ENCODE measurements at regions of chr9 and their contacts with region 1.

Region 1: DNA sequence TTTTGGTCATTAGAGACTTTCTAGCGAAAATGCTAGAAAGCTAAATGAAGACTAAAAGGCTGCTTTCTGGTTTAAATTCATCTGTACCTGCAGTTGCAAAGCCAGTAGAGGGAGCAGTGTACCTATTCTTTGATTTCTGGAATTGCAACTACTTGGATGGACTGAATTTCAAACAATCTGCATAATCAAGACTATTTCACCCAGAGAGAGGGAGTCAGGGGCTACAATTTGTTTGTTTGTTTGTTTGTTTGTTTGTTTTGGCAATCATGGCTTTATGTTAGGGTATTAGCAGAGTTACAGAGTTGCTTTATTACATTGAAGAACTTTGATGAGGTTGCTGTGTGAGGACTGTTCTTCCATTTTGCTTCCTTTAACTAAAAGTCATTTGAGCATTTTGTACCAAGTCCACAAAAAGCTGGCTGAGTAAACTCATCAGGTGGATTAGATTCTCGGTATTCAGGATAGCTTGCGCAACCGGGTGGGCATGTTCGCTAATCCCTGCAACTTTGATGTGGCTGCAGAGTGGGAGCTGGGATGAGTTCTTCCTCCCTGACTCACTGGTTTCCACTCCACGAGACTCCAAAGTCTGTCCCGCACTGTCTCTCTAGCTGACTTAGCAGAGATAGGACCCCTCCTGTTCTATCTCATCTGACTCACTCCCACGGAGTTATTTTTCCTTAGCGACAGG is 80.0 kb upstream of the TUT7 start:
- DNase-seq: peak; percentile 34
- ATAC-seq: peak; percentile 76
- H3K4me3 ChIP-seq: no peak overlapping the region
- H3K27ac ChIP-seq: no peak overlapping the region
- H3K4me1 ChIP-seq: peaks cover 0 to 6% of the 10 kb centered on the region in 2 experiments; a peak in 3 of 4 replicates
- H3K27me3 ChIP-seq: no peaks in the 10 kb centered on the region
- CTCF ChIP-seq: peak; percentile 58 to 88 (median 80); a peak in 5 of 6 replicates
- POLR2A ChIP-seq: no peak
- RAD21 ChIP-seq: peak; percentile 76

Region 2: GRCh38 chr9:86413966-86414880 is 20.0 kb before region 1 on chr9:
- CTCF ChIA-PET with region 1: interaction called, 16 read pairs
- POLR2A ChIA-PET with region 1: no interaction called
- RAD21 ChIA-PET with region 1: no interaction called
- intact Hi-C with region 1: no loop called
- DNase-seq: no peak
- ATAC-seq: peak; percentile 69
- H3K4me3 ChIP-seq: no peak overlapping the region
- H3K27ac ChIP-seq: no peak overlapping the region
- H3K4me1 ChIP-seq: no peaks in the 10 kb centered on the region
- H3K27me3 ChIP-seq: peaks cover 8% of the 10 kb centered on the region; the same call in 1 of the 2 replicates
- CTCF ChIP-seq: peak; percentile 51 to 82 (median 56); a peak in 5 of 6 replicates
- POLR2A ChIP-seq: no peak
- RAD21 ChIP-seq: peak; percentile 74

Region 3: GRCh38 chr9:86460216-86461004 is 26.2 kb after region 1 on chr9:
- CTCF ChIA-PET with region 1: no interaction called
- POLR2A ChIA-PET with region 1: no interaction called
- RAD21 ChIA-PET with region 1: no interaction called
- intact Hi-C with region 1: no loop called
- DNase-seq: no peak
- ATAC-seq: no peak
- H3K4me3 ChIP-seq: no peak overlapping the region
- H3K27ac ChIP-seq: no peak overlapping the region
- H3K4me1 ChIP-seq: no peaks in the 10 kb centered on the region
- H3K27me3 ChIP-seq: peaks cover 8% of the 10 kb centered on the region; the same call in 1 of the 2 replicates
- CTCF ChIP-seq: no peak
- POLR2A ChIP-seq: no peak
- RAD21 ChIP-seq: no peak

Region 4: DNA sequence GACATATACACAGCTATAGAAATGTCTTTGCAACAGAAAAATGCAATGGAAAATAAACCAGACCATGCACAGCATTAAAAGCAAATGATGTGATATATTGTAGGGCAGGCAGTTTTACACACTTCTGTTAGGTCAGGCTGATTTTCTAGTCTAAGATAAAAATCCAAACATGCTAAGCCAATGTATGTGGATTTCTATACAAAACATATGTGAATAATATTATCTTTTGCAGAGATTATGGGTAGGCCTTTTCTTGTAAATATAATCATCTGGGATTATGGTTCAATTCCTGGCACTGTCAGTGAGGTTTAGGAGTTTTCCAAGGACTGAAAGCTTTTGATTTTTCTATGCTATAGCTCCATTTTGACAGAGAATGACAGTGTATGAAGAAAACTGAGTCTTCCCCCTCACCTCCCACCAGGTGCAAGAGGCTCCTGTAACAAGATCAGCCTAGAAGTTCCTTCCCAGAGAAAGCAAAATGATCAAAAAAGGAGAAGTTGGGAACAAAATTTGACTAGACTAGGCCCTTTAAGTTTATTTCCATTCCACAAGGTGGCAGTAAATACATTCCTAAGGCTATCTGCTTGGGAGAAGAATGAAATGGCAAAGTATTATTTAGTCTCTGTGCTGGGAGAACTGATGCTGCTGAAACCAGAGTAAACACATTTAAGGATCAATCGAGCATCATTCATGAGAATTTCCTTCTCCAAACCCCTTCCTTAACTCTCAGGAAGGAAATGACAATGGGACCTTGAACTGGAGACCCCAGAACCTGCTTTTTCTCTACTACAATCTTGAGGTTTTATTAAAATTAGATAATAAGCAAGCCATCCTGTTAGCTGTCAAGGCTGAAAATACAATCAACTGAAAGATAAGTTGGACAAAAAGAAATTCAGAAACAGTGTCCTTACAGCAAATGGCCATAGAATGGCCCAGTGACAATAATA is 53.0 kb after region 1 on chr9:
- CTCF ChIA-PET with region 1: interaction called, 15 read pairs
- POLR2A ChIA-PET with region 1: no interaction called
- RAD21 ChIA-PET with region 1: no interaction called
- intact Hi-C with region 1: no loop called
- DNase-seq: peak; percentile 31
- ATAC-seq: peak; percentile 68; the same call in 1 of the 2 replicates
- H3K4me3 ChIP-seq: no peak overlapping the region
- H3K27ac ChIP-seq: no peak overlapping the region
- H3K4me1 ChIP-seq: no peaks in the 10 kb centered on the region
- H3K27me3 ChIP-seq: peaks cover 23% of the 10 kb centered on the region
- CTCF ChIP-seq: peak; percentile 40 to 62 (median 46); a peak in 4 of 6 replicates
- POLR2A ChIP-seq: no peak
- RAD21 ChIP-seq: peak; percentile 73

Region 5: DNA sequence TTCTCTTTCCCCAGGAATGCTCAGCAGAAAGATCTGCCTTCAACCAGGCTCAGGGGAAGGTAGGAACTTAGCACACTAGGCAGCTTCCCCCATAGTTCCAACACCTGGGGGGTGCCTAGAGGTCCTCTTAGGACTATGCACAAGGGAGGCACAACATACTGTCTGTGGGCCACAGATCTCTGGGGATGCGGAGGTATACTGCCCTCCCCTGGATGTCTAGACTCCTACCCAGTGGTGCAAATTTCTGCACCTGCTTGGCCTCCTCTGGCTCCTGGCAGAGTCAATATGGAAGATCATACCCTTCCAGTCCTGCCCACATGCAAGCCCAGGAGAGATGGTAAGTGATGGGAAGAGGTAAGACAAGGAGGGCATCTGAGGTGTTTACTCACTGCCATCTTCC is 816.0 kb after region 1 on chr9:
- CTCF ChIA-PET with region 1: no interaction called
- POLR2A ChIA-PET with region 1: no interaction called
- RAD21 ChIA-PET with region 1: no interaction called
- intact Hi-C with region 1: loop called (anchors 5 kb)
- DNase-seq: no peak
- ATAC-seq: peak; percentile 44; the same call in 1 of the 2 replicates
- H3K4me3 ChIP-seq: no peak overlapping the region
- H3K27ac ChIP-seq: no peak overlapping the region
- H3K4me1 ChIP-seq: no peaks in the 10 kb centered on the region
- H3K27me3 ChIP-seq: peaks cover 21% of the 10 kb centered on the region
- CTCF ChIP-seq: 0 out of 6 replicates have a peak, but pooled peaks of 2 of the 3 experiments have one; percentile 8 to 14
- POLR2A ChIP-seq: no peak
- RAD21 ChIP-seq: peak; percentile 14; the same call in 1 of the 2 replicates

Region 6: DNA sequence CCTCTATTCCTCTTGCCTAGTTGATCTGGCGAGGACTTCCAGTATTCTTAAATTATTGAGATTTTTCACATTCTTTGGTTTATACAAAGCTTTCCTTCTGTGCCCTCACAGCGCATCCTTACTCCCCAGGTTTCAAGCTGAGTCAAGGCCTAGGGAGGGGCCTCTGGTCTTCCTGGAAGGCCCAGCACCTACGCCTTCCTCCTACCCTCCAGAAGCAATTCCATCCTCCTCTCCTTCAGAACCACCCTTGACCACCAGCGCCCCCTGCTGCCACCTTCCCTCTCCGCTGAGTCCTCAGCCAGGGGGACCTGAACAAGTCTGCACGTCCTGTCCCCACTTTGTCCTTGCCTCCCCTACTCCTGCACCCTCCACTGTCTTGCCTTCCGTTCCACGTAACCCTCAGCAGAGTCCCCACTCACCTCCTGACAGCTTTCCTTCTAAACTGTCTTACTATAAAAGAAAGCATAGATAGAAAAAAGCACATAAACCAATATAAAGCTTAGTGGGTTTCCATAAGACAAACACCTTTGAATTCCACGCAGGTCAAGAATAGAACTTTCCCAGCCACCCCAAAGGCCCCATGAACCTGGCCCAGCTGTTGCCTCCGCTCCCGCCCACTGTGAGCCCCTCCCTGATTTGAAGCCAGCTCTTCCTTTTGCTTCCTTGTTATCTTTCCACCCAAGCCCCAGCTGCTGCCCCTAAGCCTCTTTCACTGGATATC is 1228.8 kb after region 1 on chr9:
- CTCF ChIA-PET with region 1: interaction called, 5 read pairs
- POLR2A ChIA-PET with region 1: no interaction called
- RAD21 ChIA-PET with region 1: no interaction called
- intact Hi-C with region 1: loop called (anchors 5 kb)
- DNase-seq: peak; percentile 51
- ATAC-seq: peak; percentile 98
- H3K4me3 ChIP-seq: no peak overlapping the region
- H3K27ac ChIP-seq: no peak overlapping the region
- H3K4me1 ChIP-seq: no peaks in the 10 kb centered on the region
- H3K27me3 ChIP-seq: no peaks in the 10 kb centered on the region
- CTCF ChIP-seq: peak; percentile 84 to 90 (median 85)
- POLR2A ChIP-seq: no peak
- RAD21 ChIP-seq: peak; percentile 92

Region 7: DNA sequence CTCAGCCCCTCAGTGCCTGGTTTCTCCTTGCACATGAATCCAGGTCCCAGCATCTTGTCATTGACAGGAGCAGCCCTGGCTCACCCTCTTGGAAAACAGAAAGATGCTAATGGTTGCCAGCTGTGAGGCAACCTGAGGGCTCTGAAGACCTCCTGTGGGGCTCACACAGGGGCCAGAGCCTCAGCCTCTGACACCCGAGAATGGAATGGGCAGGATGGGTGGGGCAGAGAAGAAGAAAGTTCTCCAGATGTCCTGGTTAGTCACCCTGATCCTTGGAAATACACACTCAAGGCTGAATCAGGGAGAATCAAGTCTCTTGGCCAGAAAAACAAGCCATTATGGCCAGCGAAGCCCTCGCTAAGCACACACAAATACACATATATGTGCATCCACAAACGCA is 1416.2 kb after region 1 on chr9:
- CTCF ChIA-PET with region 1: no interaction called
- POLR2A ChIA-PET with region 1: no interaction called
- RAD21 ChIA-PET with region 1: no interaction called
- intact Hi-C with region 1: no loop called
- DNase-seq: no peak
- ATAC-seq: 0 out of 2 replicates have a peak, but pooled peaks have one; percentile 42
- H3K4me3 ChIP-seq: no peak overlapping the region
- H3K27ac ChIP-seq: no peak overlapping the region
- H3K4me1 ChIP-seq: peaks cover 0 to 8% of the 10 kb centered on the region in 2 experiments; a peak in 2 of 4 replicates
- H3K27me3 ChIP-seq: no peaks in the 10 kb centered on the region
- CTCF ChIP-seq: no peak
- POLR2A ChIP-seq: no peak
- RAD21 ChIP-seq: no peak

Measured in HCT116 (cell line).